ENCODE measurements at regions of chr1 and their contacts with region 1.

Region 1: GRCh38 chr1:6727535-6727934 is 25.9 kb upstream of the DNAJC11 start:
- DNase-seq: no peak
- ATAC-seq: peak; percentile 20

Region 2: GRCh38 chr1:6784560-6785317 is 57.2 kb after region 1 on chr1:
- intact Hi-C with region 1: loop called (anchors 5 kb)
- DNase-seq: peak; percentile 99
- ATAC-seq: peak; percentile 93

Region 3: GRCh38 chr1:6889875-6890480 is 162.4 kb after region 1 on chr1:
- intact Hi-C with region 1: loop called (anchors 5 kb)
- DNase-seq: no peak
- ATAC-seq: peak; percentile 63

Region 4: DNA sequence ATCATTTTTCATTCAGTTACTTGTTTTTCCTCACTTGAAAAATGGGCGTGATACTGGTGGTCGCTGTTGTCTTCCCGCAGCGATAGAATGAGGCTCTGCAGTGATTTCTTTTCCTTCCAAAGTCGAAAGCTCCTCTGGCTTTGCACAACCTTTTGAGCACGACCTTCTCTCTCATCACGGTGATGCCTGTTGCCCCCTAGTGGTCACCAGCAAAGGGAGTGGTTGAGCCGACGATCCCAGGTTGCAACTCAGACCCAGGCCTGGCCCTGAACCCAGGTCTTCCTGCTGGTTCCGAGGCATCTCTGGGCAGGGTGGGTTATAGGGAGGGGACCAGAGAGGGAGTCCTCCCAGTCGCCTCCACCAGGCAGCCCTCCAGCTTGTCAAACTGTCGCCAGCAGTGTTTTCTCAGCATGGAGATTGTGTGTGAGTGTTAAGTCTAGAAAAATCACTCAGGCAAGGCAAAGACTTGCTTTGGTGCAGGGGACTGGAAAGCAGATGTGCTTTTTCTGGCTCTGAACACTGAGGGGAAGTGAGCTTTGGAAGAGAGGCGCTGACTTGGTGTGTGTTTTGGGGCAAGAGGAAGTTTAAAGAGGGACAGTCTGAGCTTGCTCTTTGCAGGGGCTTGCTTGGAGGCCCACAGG is 343.0 kb after region 1 on chr1:
- intact Hi-C with region 1: loop called (anchors 5 kb)
- DNase-seq: no peak
- ATAC-seq: peak; percentile 73

Region 5: GRCh38 chr1:7218210-7218832 is 490.8 kb after region 1 on chr1:
- intact Hi-C with region 1: loop called (anchors 5 kb)
- DNase-seq: no peak
- ATAC-seq: no peak